ENCODE measurements at regions of chr3 and their contacts with region 1.

Region 1: GRCh38 chr3:71599416-71599815 is 15.9 kb upstream of the FOXP1 start:
- DNase-seq: no peak
- H3K4me3 ChIP-seq: no peak overlapping the region
- H3K4me3 Mint-ChIP-seq: no peak overlapping the region
- H3K27ac ChIP-seq: no peak overlapping the region
- H3K27ac Mint-ChIP-seq: no peak overlapping the region
- H3K4me1 ChIP-seq: no peaks in the 10 kb centered on the region
- H3K4me1 Mint-ChIP-seq: peaks cover 10% of the 10 kb centered on the region
- H3K27me3 ChIP-seq: no peaks in the 10 kb centered on the region
- H3K27me3 Mint-ChIP-seq: peaks cover 0 to 2% (median 2%) of the 10 kb centered on the region in 3 donors
- CTCF ChIP-seq: no peak

Region 2: GRCh38 chr3:71641674-71642073 is 42.3 kb after region 1 on chr3:
- intact Hi-C with region 1: loop called in 1 of 2 experiments (anchors 10 kb)
- DNase-seq: peak in 1 of 3 donors; percentile 33
- H3K4me3 ChIP-seq: no peak overlapping the region
- H3K4me3 Mint-ChIP-seq: no peak overlapping the region
- H3K27ac ChIP-seq: no peak overlapping the region
- H3K27ac Mint-ChIP-seq: no peak overlapping the region
- H3K4me1 ChIP-seq: peaks cover 9 to 14% of the 10 kb centered on the region in 2 donors
- H3K4me1 Mint-ChIP-seq: peaks cover 16% of the 10 kb centered on the region
- H3K27me3 ChIP-seq: no peaks in the 10 kb centered on the region
- H3K27me3 Mint-ChIP-seq: peaks cover 1 to 4% (median 2%) of the 10 kb centered on the region in 3 donors
- CTCF ChIP-seq: no peak

Region 3: DNA sequence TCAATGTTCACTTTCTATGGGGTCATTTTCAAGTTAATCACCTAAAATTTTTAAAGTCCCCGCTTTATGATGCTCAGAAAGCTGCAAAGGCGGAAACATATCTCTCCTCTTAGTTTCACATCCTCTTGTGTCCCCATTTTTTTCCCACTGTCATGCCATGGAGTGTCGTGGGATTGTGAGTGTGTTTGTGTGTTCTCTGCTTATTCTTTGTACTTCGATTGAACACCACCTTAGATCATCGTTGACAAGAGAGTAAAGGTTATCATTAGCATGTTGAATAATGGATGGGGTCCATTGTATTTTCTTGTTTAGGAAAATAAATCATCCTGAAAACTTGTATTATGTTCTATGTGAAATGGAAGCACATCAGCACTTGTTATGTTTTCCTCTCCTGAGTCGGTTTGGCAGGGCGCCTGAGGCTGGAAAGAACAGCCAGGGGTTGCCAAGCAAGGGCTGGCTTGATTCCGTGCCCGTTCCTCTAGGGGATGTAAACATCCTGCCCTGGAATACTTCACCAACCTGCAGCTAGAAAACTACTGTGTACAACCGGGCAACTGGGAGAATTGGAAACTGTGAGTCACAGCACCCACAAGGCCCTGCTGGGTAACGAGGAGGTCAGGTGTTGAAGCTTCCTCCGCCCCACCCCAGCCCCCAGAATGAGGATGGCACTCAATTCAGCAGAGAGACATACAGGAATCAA is 58.6 kb after region 1 on chr3:
- intact Hi-C with region 1: no loop called
- DNase-seq: no peak
- H3K4me3 ChIP-seq: no peak overlapping the region
- H3K4me3 Mint-ChIP-seq: no peak overlapping the region
- H3K27ac ChIP-seq: no peak overlapping the region
- H3K27ac Mint-ChIP-seq: peak overlapping the region in 1 of 7 donors; percentile 13
- H3K4me1 ChIP-seq: no peaks in the 10 kb centered on the region
- H3K4me1 Mint-ChIP-seq: peaks cover 17% of the 10 kb centered on the region
- H3K27me3 ChIP-seq: no peaks in the 10 kb centered on the region
- H3K27me3 Mint-ChIP-seq: peaks cover 0 to 3% (median 0%) of the 10 kb centered on the region in 3 donors
- CTCF ChIP-seq: no peak

Measured in CD14-positive monocyte (primary cell).